Heart right ventricle (tissue), 16 donors: ENCODE measurements at regions of chr2 and their contacts with region 1.

Region 1: DNA sequence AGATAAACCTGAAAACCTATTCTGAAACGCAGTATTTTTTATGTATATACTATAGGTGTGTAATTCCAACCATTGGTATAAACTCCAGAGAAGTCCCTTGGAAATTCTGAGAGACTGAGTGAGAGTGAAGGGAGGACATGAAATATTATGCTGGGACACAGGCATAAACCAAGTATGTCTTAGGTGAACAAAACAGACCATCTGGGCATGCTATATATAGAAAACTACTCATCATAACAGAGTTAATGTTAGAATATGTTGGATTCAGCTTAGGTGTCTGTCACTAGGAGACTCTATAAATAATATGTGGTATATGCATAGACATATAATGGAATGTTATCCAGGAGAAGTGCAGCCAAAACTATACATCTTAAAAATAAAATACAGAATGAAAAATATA is 282.6 kb downstream of the LRP1B start:
- DNase-seq: no peak
- ATAC-seq: no peak
- H3K4me3 ChIP-seq: no peak overlapping the region
- H3K27ac ChIP-seq: no peak overlapping the region
- H3K4me1 ChIP-seq: no peaks in the 10 kb centered on the region
- H3K27me3 ChIP-seq: no peaks in the 10 kb centered on the region
- CTCF ChIP-seq: no peak

Region 2: GRCh38 chr2:141728886-141729285 is 119.3 kb before region 1 on chr2:
- intact Hi-C with region 1: no loop called
- DNase-seq: no peak
- ATAC-seq: no peak
- H3K4me3 ChIP-seq: no peak overlapping the region
- H3K27ac ChIP-seq: no peak overlapping the region
- H3K4me1 ChIP-seq: no peaks in the 10 kb centered on the region
- H3K27me3 ChIP-seq: no peaks in the 10 kb centered on the region
- CTCF ChIP-seq: no peak

Region 3: DNA sequence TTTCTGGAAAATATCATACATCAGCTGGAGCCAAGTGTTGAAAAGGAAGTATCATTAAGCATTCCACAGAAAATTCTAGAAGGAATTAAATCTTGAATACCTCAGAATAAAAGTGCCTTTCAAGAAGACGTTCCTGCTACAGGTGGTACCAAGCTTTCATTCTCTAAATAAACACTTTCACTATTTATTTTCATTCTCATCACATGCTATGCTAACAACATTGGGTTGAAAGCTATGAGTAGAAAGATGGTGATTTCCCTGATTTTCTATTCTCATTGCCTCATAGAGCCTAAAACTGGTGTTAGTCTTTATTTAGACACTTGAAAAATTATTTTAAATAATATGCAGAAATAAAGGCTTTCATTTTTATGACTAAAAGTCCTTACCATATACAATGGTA is 42.1 kb before region 1 on chr2:
- intact Hi-C with region 1: loop called in 1 of 10 experiments (anchors 1 kb)
- DNase-seq: no peak
- ATAC-seq: no peak
- H3K4me3 ChIP-seq: no peak overlapping the region
- H3K27ac ChIP-seq: no peak overlapping the region
- H3K4me1 ChIP-seq: no peaks in the 10 kb centered on the region
- H3K27me3 ChIP-seq: no peaks in the 10 kb centered on the region
- CTCF ChIP-seq: no peak